ENCODE measurements at regions of chr1 and their contacts with region 1.

Region 1: DNA sequence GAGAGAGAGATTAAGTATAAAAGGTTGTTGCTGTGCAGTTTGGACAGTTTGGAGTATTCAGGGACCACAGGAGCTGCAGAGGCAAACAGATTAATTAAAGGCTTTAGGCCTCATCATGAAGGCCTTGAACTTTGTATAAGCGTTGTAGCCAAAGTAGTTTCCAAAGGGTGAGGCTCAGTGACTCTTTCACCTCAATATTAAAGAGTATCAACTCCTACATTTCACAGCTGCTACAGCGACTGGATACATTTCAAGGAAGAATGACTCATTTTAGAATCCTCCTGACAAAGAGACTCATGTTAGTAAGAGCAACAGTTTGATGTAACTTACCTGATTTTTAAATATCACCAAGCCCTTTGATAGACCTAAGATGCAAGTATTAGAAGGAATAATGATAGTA is 355.5 kb downstream of the HLX start:
- DNase-seq: no peak
- ATAC-seq: peak; percentile 47
- H3K4me3 Mint-ChIP-seq: no peak overlapping the region
- H3K27ac Mint-ChIP-seq: no peak overlapping the region
- H3K4me1 Mint-ChIP-seq: no peaks in the 10 kb centered on the region
- H3K27me3 Mint-ChIP-seq: peaks cover 2% of the 10 kb centered on the region

Region 2: GRCh38 chr1:220770245-220770918 is 464.4 kb before region 1 on chr1:
- CTCF ChIA-PET with region 1: no interaction called
- POLR2A ChIA-PET with region 1: no interaction called
- intact Hi-C with region 1: no loop called
- DNase-seq: no peak
- ATAC-seq: no peak
- H3K4me3 Mint-ChIP-seq: no peak overlapping the region
- H3K27ac Mint-ChIP-seq: no peak overlapping the region
- H3K4me1 Mint-ChIP-seq: no peaks in the 10 kb centered on the region
- H3K27me3 Mint-ChIP-seq: peaks cover 4% of the 10 kb centered on the region

Region 3: GRCh38 chr1:222124602-222125001 is 889.8 kb after region 1 on chr1:
- CTCF ChIA-PET with region 1: no interaction called
- POLR2A ChIA-PET with region 1: no interaction called
- intact Hi-C with region 1: loop called in 1 of 2 experiments (anchors 5 kb)
- DNase-seq: no peak
- ATAC-seq: no peak
- H3K4me3 Mint-ChIP-seq: no peak overlapping the region
- H3K27ac Mint-ChIP-seq: no peak overlapping the region
- H3K4me1 Mint-ChIP-seq: no peaks in the 10 kb centered on the region
- H3K27me3 Mint-ChIP-seq: peaks cover 2% of the 10 kb centered on the region

Measured in activated CD4-positive, alpha-beta T cell treated with anti-CD3 and anti-CD28 coated beads for 36 hours (primary cell).